Left cardiac atrium (tissue), 4 donors: ENCODE measurements at regions of chr10 and their contacts with region 1.

Region 1: DNA sequence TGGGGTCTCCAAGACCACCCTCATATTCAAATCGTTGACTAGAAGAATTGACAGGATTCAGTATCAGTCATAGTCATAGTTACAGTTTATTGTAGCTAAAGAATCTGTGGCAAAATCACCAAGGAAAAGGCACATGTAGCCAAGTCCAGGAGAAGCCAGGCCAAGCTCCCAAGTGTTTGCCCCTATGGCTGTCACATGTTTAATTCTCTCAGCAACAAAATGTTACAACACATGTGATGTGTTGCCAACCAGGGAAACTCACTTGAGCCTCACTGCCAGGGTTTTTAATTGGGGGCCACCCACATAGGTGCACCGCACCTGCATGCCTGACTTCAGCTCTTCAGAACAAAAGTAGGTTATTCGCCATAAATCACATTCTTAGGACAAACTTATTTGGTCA is 1030.9 kb upstream of the CELF2 start:
- DNase-seq: no peak
- ATAC-seq: no peak

Region 2: DNA sequence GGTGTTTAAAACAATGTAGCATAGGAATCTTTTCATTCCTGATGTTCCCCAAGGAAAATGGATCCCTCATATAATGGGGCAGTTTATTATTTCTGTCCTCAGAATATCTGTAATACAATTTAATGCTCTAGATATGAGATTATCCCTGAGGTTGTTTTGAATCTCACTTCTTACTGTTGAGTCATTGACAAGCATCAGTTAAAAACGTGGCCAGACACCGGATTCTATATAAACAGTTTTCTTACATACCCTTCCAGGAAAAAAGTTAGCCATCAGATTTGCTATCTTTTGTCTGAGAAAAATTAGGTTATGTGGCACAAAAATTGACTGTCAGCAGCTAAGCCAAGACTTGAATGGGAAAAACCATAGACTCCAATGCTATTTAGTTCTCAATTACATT is 491.1 kb after region 1 on chr10:
- intact Hi-C with region 1: no loop called
- DNase-seq: no peak
- ATAC-seq: no peak

Region 3: DNA sequence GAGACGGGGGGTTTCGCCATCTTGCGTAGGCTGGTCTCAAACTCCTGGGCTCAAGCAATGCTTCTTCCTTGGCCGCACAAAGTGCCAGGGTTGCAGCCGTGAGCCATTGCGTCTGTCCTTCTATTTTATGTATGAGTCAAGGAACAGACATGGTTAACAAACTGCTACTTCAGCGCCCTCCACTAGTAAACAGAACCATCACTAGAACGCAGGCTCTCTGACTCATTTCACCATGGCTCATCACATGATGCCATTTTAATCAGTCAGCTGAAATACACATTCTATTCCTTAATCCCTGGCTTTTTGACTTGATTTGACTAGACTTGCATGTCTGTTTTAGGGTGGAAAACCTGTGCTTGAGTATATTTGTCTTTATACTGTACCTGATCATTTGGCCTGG is 1072.2 kb after region 1 on chr10:
- intact Hi-C with region 1: loop called in 1 of 2 experiments (anchors 10 kb)
- DNase-seq: no peak
- ATAC-seq: peak in 1 of 2 donors; percentile 68